CD4-positive, alpha-beta memory T cell (primary cell): ENCODE measurements at regions of chr6 and their contacts with region 1.

Region 1: GRCh38 chr6:31971993-31972708 is at the start of gene DXO:
- DNase-seq: peak; percentile 99 to 100 (median 99)
- H3K4me3 ChIP-seq: peak within 1 kb of the TSS; percentile 63 to 77
- H3K4me3 Mint-ChIP-seq: peak within 1 kb of the TSS; percentile 97 to 99 (median 98)
- H3K27ac ChIP-seq: peak within 1 kb of the TSS; percentile 99
- H3K27ac Mint-ChIP-seq: peak within 1 kb of the TSS; percentile 100
- H3K4me1 ChIP-seq: peaks cover 31% of the 10 kb centered on the region
- H3K4me1 Mint-ChIP-seq: peaks cover 21 to 58% (median 32%) of the 10 kb centered on the region in 4 donors
- H3K27me3 ChIP-seq: no peaks in the 10 kb centered on the region
- H3K27me3 Mint-ChIP-seq: no peaks in the 10 kb centered on the region
- total RNA-seq, gene DXO: 27.8 to 30.3 TPM

Region 2: GRCh38 chr6:31952140-31952805 is 19.9 kb before region 1 on chr6:
- CTCF ChIA-PET with region 1: interaction called, 21 read pairs
- POLR2A ChIA-PET with region 1: interaction called, 195 read pairs
- intact Hi-C with region 1: no loop called
- DNase-seq: peak in 1 of 5 donors; percentile 19
- H3K4me3 ChIP-seq: no peak overlapping the region
- H3K4me3 Mint-ChIP-seq: no peak overlapping the region
- H3K27ac ChIP-seq: no peak overlapping the region
- H3K27ac Mint-ChIP-seq: peak overlapping the region in 4 of 7 donors; percentile 46 to 82 (median 60)
- H3K4me1 ChIP-seq: peaks cover 4% of the 10 kb centered on the region
- H3K4me1 Mint-ChIP-seq: peaks cover 0 to 3% (median under 1%) of the 10 kb centered on the region in 4 donors
- H3K27me3 ChIP-seq: no peaks in the 10 kb centered on the region
- H3K27me3 Mint-ChIP-seq: no peaks in the 10 kb centered on the region

Region 3: GRCh38 chr6:31958741-31959739 is 13.1 kb before region 1 on chr6 and contains the starts of genes NELFE and SKIC2:
- CTCF ChIA-PET with region 1: interaction called, 21 read pairs
- POLR2A ChIA-PET with region 1: interaction called, 195 read pairs
- intact Hi-C with region 1: loop called (anchors 1 kb)
- DNase-seq: peak; percentile 98 to 99 (median 99)
- H3K4me3 ChIP-seq: peak within 1 kb of the TSS; percentile 95
- H3K4me3 Mint-ChIP-seq: peak within 1 kb of the TSS; percentile 92 to 98 (median 96)
- H3K27ac ChIP-seq: peak within 1 kb of the TSS; percentile 98
- H3K27ac Mint-ChIP-seq: peak within 1 kb of the TSS; percentile 97 to 99 (median 98)
- H3K4me1 ChIP-seq: peaks cover 35% of the 10 kb centered on the region
- H3K4me1 Mint-ChIP-seq: peaks cover 21 to 43% (median 32%) of the 10 kb centered on the region in 4 donors
- H3K27me3 ChIP-seq: no peaks in the 10 kb centered on the region
- H3K27me3 Mint-ChIP-seq: no peaks in the 10 kb centered on the region
- total RNA-seq, gene NELFE: 45.8 to 49.0 TPM
- total RNA-seq, gene SKIC2: 117 to 119 TPM

Region 4: DNA sequence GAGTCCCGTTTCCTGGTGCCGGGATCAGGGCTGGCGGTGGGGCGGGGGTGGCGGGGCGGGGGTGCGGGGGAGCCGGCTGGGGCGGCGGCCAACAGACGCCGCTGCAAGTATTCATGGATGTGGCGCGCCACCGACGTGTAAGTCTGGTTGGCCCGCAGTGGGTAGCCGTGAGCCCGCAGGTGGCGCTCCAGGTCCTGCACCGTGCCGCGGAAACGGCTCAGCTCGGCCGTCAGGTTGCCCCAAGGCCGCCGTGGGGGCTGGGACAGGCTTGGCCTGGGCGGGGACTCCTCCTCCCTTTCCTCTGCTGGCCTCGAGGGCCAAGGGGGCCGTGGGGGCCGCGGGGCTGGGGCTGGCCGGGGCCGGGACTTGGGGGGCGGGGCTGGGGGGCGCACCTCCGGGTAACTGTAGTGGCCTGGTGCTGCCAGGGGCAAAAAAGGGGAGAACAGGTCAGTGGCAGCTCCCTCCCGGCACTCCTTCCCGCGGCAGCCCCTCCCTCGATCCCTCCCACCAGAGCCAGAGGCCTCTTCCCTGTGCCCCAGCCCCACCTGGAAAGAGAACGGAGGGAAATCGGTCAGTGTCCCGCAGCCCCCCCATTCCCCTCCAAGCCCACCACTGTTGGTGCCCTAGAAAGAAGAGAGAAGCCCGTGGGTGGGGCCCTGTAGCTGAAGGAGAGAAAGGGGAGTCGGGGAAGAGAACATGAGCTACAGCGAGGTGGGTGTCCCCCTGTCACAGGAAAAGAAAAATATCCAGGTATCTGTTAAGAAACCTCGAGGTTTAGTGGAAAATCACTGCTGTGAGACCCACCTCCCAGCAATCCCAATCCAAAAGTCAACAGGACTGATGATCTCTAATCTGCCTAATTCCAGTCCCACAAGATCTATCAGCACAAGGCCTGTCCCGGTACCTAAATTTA is 115.7 kb after region 1 on chr6:
- CTCF ChIA-PET with region 1: no interaction called
- POLR2A ChIA-PET with region 1: no interaction called
- intact Hi-C with region 1: no loop called
- DNase-seq: peak; percentile 51 to 64 (median 60)
- H3K4me3 ChIP-seq: no peak overlapping the region
- H3K4me3 Mint-ChIP-seq: peak overlapping the region in 1 of 8 donors; percentile 52
- H3K27ac ChIP-seq: no peak overlapping the region
- H3K27ac Mint-ChIP-seq: peak overlapping the region in 1 of 7 donors; percentile 35
- H3K4me1 ChIP-seq: no peaks in the 10 kb centered on the region
- H3K4me1 Mint-ChIP-seq: peaks cover 1 to 21% (median 3%) of the 10 kb centered on the region in 4 donors
- H3K27me3 ChIP-seq: peaks cover 16% of the 10 kb centered on the region
- H3K27me3 Mint-ChIP-seq: peaks cover 14 to 19% of the 10 kb centered on the region in 2 donors